ENCODE measurements at regions of chr13 and their contacts with region 1.

Region 1: GRCh38 chr13:91247768-91248167 is 99.7 kb upstream of the MIR17HG start:
- DNase-seq: no peak
- H3K4me3 ChIP-seq: no peak overlapping the region
- H3K27ac ChIP-seq: no peak overlapping the region
- H3K4me1 ChIP-seq: no peaks in the 10 kb centered on the region
- H3K27me3 ChIP-seq: no peaks in the 10 kb centered on the region
- CTCF ChIP-seq: peak; percentile 16 to 37

Region 2: DNA sequence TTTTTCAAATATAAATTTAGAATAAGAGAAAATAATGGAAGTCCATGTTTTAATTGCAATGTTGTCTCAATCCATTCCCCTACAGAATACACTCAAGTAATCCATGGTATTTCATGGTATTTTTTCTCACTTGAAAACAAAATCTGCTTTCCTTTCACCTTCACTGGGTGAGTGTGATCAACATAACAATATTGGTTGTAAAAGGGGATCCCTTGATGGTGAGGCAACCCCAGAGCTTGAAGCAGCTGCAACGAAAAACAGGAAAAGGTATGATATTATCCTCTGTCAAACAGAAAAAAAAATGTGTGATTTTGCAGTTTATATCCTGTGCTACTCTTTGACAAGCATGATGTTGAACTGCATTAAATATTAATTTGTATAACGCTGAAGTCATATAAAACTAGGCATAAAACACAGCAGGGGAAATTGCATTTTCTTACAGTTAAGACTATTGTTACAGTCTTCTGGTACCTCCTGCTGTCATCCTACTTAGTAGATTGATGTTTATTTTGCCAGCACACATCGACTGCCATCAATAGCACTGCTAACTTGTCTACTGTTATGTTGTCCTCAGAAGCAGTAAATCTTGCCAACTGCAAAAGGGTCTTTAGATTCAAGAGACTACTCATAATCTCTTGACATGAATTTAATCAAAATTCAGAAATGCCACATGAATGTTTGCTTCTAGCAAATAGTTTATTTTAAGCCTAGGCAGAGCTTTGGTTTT is 273.4 kb before region 1 on chr13:
- CTCF ChIA-PET with region 1: no interaction called
- dilution Hi-C with region 1: no loop called
- in situ Hi-C with region 1: no loop called
- intact Hi-C with region 1: no loop called
- DNase-seq: no peak
- H3K4me3 ChIP-seq: no peak overlapping the region
- H3K27ac ChIP-seq: no peak overlapping the region
- H3K4me1 ChIP-seq: no peaks in the 10 kb centered on the region
- H3K27me3 ChIP-seq: peaks cover 2% of the 10 kb centered on the region
- CTCF ChIP-seq: no peak

Region 3: GRCh38 chr13:91078093-91078679 is 169.6 kb before region 1 on chr13:
- CTCF ChIA-PET with region 1: no interaction called
- dilution Hi-C with region 1: no loop called
- in situ Hi-C with region 1: no loop called
- intact Hi-C with region 1: loop called (anchors 5 kb)
- DNase-seq: no peak
- H3K4me3 ChIP-seq: no peak overlapping the region
- H3K27ac ChIP-seq: no peak overlapping the region
- H3K4me1 ChIP-seq: no peaks in the 10 kb centered on the region
- H3K27me3 ChIP-seq: no peaks in the 10 kb centered on the region
- CTCF ChIP-seq: peak; percentile 31 to 45